ENCODE measurements at regions of chr22 and their contacts with region 1.

Region 1: GRCh38 chr22:46845296-46846149 is 83.1 kb downstream of the TBC1D22A start:
- DNase-seq: no peak
- H3K4me3 ChIP-seq: peak overlapping the region in 2 of 3 experiments; percentile 29 to 32
- H3K27ac ChIP-seq: peak overlapping the region; percentile 47
- H3K4me1 ChIP-seq: peaks cover 46% of the 10 kb centered on the region
- H3K27me3 ChIP-seq: no peaks in the 10 kb centered on the region
- CTCF ChIP-seq: peak; percentile 39 to 55

Region 2: GRCh38 chr22:46934746-46935491 is 89.4 kb after region 1 on chr22:
- CTCF ChIA-PET with region 1: no interaction called
- dilution Hi-C with region 1: no loop called
- in situ Hi-C with region 1: no loop called
- intact Hi-C with region 1: loop called (anchors 10 kb)
- DNase-seq: peak; percentile 94
- H3K4me3 ChIP-seq: no peak overlapping the region
- H3K27ac ChIP-seq: peak overlapping the region; percentile 33
- H3K4me1 ChIP-seq: peaks cover 15% of the 10 kb centered on the region
- H3K27me3 ChIP-seq: no peaks in the 10 kb centered on the region
- CTCF ChIP-seq: no peak

Region 3: DNA sequence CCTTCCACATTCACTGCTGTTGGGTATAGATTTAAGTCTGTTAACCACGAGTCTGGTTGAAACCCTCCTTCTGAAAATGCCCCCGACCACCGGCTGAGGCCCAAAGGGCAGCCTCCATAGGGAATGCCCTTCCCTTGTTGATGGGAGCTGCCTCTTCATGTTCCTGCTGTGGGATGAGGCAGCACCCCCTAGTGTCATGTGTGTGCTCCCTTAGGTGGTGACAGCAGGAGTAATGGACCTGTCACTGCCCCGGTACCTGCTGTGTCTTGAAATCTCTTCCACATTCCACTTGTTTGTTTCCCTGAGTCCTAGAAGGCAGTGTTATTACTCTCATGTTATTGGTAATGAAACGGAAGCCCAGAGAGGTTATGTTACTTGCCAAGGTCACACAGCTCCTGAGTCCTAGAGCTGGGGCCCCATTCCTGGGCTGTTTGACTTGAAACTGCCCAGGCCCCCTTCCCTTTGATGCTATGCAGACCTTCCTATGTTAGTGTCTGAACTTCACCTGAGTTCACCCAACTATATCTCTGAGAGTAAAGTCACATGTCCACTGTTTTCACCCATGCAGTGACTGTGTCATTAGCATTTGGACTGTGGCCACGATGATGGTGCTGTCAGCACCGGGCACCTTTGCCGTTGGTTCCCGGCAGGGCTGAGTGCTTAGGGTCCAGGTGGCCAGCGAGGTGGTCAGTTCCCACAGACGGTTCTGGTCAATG is 151.2 kb after region 1 on chr22:
- CTCF ChIA-PET with region 1: no interaction called
- dilution Hi-C with region 1: no loop called
- in situ Hi-C with region 1: no loop called
- intact Hi-C with region 1: loop called (anchors 1 kb)
- DNase-seq: peak; percentile 3
- H3K4me3 ChIP-seq: no peak overlapping the region
- H3K27ac ChIP-seq: no peak overlapping the region
- H3K4me1 ChIP-seq: no peaks in the 10 kb centered on the region
- H3K27me3 ChIP-seq: no peaks in the 10 kb centered on the region
- CTCF ChIP-seq: peak; percentile 9 to 57

Region 4: DNA sequence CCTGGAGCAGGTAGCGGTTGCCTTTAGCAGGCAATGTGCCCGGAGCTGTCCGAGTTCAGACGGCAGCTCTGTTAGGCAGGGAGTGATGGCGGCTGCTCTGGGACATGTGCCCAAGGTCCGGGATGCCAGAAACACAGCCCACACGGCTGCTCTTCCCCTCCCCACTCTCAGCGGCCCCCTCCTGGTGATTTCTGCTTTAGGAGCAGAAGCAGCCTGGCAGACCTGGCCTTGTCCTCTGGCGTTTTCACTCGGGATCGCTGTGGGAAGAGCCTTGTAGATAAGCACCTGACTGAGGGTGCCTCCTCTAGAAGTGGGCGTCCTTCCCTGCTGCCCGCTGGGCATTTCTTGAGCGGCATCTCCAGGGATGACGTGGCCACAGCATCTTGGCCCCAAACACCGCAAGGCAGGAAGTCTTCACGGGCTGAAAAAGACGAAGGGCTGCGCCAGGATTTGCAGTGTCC is 309.1 kb after region 1 on chr22:
- CTCF ChIA-PET with region 1: interaction called, 3 read pairs
- dilution Hi-C with region 1: no loop called
- in situ Hi-C with region 1: no loop called
- intact Hi-C with region 1: loop called (anchors 5 kb)
- DNase-seq: peak; percentile 67
- H3K4me3 ChIP-seq: peak overlapping the region in 2 of 3 experiments; percentile 6 to 20
- H3K27ac ChIP-seq: no peak overlapping the region
- H3K4me1 ChIP-seq: peaks cover 14% of the 10 kb centered on the region
- H3K27me3 ChIP-seq: no peaks in the 10 kb centered on the region
- CTCF ChIP-seq: peak in 1 of 2 donors; percentile 18

Region 5: DNA sequence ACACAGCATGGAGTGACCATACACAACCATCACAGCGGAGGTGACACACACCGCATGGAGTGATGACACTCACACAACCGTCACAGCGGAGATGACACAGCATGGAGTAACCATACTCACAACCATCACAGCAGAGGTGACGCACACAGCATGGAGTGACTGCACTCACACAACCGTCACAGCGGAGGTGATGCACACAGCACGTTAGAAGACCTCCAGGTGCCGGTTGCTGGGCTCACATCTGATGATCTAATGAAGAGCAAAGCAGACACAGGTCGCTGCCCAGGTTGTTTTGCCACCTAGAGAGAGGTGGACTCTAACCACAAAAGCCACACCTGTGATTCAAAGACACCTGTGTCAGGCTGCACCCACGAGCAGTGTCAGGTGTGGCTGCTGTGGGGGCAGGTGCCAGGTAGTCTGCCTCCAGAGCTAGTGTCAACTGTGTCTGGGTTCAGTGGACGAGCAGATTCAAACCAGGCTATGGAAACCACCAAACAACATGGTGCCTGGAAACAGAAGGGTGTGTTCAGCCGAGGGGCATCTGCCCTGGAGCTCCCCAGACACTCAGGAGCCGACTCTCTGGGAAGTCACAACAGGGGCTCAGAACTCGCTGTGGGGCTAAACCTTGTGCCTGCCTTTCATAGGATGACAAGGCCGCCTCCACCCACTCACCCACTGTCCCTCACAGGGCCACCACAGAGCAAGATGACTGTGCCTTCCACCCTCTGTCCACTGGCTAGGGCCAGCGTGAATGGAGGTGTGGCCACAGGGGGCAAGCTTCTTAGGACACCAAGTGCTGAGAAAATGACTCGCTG is 525.1 kb after region 1 on chr22:
- CTCF ChIA-PET with region 1: no interaction called
- dilution Hi-C with region 1: no loop called
- in situ Hi-C with region 1: loop called in 1 of 2 experiments (anchors 25 kb)
- intact Hi-C with region 1: no loop called
- DNase-seq: no peak
- H3K4me3 ChIP-seq: no peak overlapping the region
- H3K27ac ChIP-seq: no peak overlapping the region
- H3K4me1 ChIP-seq: no peaks in the 10 kb centered on the region
- H3K27me3 ChIP-seq: no peaks in the 10 kb centered on the region
- CTCF ChIP-seq: no peak

Region 6: DNA sequence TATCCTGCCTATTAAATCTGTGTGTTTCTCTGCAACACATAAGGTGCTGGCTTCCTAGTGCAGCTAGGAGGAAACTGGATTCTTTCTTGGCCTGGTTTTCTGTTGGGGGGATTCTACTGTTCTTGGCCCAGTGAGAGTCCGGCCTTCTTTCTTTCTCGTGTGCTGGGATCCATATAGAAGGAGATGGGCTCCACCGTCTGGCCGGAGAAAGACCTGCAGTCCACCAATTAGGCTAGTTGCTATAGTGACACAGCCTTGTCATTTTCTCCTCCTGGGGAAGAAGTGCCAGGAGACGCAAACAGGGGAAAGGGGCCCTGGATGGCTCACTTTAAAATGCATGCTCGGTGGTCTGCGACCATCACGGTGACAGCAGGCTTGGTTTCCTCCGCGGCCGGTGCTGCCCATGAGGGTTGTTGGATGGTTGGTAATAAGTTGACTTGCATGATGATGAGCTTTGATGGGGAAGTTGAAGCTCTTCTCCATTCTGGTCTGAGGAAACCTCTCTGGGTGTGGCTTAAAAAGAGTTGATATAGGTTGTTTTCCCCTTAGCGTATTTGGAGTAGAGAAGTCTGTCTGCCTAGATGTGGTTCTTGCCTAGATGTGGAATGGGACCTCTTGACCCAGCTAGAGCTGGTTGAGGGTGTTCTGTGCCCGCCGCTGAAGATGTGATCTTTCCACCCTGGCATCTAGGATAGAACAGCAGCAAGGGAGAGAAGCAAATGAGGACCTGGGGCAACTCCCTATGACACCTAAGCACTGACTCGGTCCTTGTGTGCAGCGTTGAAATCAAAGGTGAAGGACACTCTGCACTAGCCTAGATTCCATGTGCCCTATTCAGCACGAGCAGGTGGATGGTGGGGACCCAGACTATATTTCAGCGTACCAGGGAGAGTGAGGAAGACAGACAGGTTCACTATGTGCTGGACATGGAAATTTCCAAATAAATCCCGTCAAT is 1647.1 kb after region 1 on chr22:
- CTCF ChIA-PET with region 1: interaction called, 3 read pairs
- dilution Hi-C with region 1: no loop called
- in situ Hi-C with region 1: loop called in 1 of 2 experiments (anchors 10 kb)
- intact Hi-C with region 1: loop called (anchors 1 kb)
- DNase-seq: peak; percentile 31
- H3K4me3 ChIP-seq: no peak overlapping the region
- H3K27ac ChIP-seq: no peak overlapping the region
- H3K4me1 ChIP-seq: no peaks in the 10 kb centered on the region
- H3K27me3 ChIP-seq: peaks cover 15% of the 10 kb centered on the region
- CTCF ChIP-seq: peak; percentile 69 to 75